ENCODE measurements at regions of chr22 and their contacts with region 1.

Region 1: GRCh38 chr22:29245637-29246385 is 22.0 kb downstream of the RHBDD3 start:
- DNase-seq: peak; percentile 76
- H3K4me3 Mint-ChIP-seq: no peak overlapping the region
- H3K27ac Mint-ChIP-seq: no peak overlapping the region
- H3K4me1 Mint-ChIP-seq: no peaks in the 10 kb centered on the region
- H3K27me3 Mint-ChIP-seq: peaks cover 9% of the 10 kb centered on the region

Region 2: GRCh38 chr22:28594797-28595462 is 650.9 kb before region 1 on chr22:
- CTCF ChIA-PET with region 1: interaction called, 13 read pairs
- POLR2A ChIA-PET with region 1: no interaction called
- intact Hi-C with region 1: loop called (anchors 10 kb)
- DNase-seq: no peak
- H3K4me3 Mint-ChIP-seq: no peak overlapping the region
- H3K27ac Mint-ChIP-seq: no peak overlapping the region
- H3K4me1 Mint-ChIP-seq: no peaks in the 10 kb centered on the region
- H3K27me3 Mint-ChIP-seq: peaks cover 9% of the 10 kb centered on the region

Region 3: DNA sequence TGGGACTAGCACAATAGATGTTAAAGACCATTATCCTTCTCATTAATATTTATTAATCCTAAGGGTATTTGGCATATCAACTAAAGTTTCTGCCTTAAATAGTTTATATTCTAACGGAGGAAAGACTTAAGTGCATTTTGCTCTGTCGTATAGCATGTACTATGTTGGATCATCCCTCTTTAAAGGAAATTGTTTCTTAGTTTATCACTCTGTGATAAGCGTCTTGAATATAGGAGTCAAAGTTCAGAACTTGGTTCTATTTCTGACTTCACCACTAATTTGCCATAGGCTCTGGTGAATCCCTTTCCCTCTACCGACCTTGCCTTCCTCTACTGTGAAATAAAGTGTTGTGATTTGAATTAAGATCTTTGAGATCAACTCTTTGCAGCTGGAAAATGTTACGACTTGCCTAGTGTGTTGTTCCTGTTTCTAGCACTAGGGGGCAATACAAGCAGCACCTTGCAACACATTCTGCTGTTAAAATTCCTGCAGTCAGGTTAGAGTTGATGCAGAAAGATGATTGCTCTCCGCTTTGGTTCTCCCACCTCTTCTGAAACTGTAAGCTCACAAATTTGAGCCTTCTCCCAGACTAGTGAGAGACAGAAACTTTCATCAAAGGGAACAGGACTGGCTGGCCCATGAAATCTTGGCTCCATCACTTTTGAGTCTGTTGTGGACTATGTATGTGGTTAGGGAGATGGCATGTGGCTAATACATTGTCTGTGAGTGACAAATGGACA is 390.3 kb before region 1 on chr22:
- CTCF ChIA-PET with region 1: interaction called, 8 read pairs
- POLR2A ChIA-PET with region 1: no interaction called
- intact Hi-C with region 1: loop called (anchors 5 kb)
- DNase-seq: peak; percentile 38
- H3K4me3 Mint-ChIP-seq: no peak overlapping the region
- H3K27ac Mint-ChIP-seq: no peak overlapping the region
- H3K4me1 Mint-ChIP-seq: no peaks in the 10 kb centered on the region
- H3K27me3 Mint-ChIP-seq: no peaks in the 10 kb centered on the region

Region 4: DNA sequence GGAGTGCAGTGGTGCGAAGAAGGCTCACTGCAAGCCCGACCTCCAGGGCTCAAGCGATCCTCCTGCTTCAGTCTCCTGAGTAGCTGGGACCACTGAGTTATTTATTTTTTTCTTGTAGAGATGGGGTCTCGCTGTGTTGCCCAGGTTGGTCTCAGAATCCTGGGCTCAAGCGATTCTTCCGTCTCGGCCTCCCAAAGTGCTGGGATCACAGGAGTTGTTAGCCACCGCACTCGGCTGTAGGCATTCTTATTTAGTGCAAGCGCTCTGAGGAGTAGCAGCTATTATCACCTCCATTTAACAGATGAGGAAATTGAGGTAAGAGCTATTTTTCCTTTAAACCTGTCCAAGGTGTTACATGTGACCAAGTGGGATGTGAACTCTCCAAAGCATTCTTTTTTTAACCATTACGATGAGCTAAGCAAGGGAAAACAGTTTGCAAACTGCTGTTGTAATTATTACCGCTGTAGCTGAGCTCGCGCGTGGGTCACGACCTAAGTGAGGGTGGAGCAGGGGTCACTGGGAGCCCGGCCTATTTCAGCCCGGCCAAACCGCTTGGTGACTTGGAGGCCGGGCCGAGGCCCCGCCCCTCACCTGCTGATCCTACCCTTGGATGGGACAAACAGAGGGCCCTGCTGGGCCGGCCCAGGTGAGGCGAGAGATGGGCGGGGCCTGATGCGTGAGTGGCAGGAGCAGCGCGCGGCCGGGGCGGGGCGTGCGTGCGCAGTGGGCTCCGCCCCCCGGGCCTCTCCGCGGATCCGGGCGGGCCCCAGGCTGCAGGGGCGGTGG is 173.4 kb before region 1 on chr22:
- CTCF ChIA-PET with region 1: interaction called, 5 read pairs
- POLR2A ChIA-PET with region 1: no interaction called
- intact Hi-C with region 1: loop called (anchors 10 kb)
- DNase-seq: peak; percentile 89
- H3K4me3 Mint-ChIP-seq: peak overlapping the region; percentile 52
- H3K27ac Mint-ChIP-seq: no peak overlapping the region
- H3K4me1 Mint-ChIP-seq: peaks cover 21% of the 10 kb centered on the region
- H3K27me3 Mint-ChIP-seq: peaks cover 42% of the 10 kb centered on the region

Region 5: GRCh38 chr22:29134448-29134847 is 111.4 kb before region 1 on chr22:
- CTCF ChIA-PET with region 1: no interaction called
- POLR2A ChIA-PET with region 1: no interaction called
- intact Hi-C with region 1: no loop called
- DNase-seq: no peak
- H3K4me3 Mint-ChIP-seq: no peak overlapping the region
- H3K27ac Mint-ChIP-seq: no peak overlapping the region
- H3K4me1 Mint-ChIP-seq: no peaks in the 10 kb centered on the region
- H3K27me3 Mint-ChIP-seq: peaks cover 15% of the 10 kb centered on the region

Region 6: DNA sequence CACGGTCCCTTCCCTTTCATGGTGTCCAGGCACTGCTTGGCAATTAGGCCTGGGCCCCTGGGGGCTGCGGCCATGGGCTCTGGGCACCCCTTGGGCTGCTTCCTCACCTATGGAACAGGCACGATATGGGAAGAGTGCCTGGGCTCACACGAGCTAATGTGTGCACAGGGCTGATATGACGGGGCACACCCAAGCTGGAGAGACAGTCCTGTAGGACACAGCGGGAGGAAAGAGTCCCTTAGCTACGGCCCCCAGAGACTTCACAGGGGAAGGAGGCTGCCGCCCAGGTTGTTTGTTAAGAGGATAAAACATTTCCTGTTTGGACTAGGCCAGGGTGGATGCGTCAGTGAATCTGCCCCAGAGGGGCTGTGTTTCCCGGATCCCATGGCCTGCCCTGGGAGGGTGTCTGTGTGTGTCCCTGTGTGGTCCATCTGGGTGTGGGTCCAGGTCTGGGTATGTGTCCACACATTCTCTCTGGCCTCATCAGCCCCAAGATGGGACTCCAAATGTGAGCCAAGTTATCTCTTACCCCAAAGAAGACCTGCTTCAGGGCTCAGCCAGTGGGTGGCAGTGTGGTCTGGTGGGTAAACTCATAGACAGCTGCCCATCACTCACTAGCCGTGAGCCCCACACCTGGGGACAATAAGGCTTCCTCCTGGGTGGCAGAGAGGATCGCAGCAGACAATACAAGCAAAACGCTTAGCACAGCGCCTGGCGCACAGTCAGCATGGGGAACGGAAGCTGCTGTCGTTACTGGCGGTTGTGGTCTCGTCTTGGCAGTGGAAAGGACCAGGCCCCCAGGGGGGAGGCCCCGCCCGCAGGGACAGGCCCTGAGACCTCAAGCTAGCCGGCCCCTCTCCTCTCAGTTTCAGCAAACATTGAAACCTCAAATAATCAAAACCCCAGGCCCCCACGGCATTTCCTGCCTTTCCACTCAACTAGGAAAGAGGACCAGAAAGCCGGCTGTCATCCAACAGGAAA is 43.3 kb before region 1 on chr22:
- CTCF ChIA-PET with region 1: interaction called, 25 read pairs
- POLR2A ChIA-PET with region 1: no interaction called
- intact Hi-C with region 1: loop called (anchors 5 kb)
- DNase-seq: peak; percentile 80
- H3K4me3 Mint-ChIP-seq: no peak overlapping the region
- H3K27ac Mint-ChIP-seq: no peak overlapping the region
- H3K4me1 Mint-ChIP-seq: peaks cover 12% of the 10 kb centered on the region
- H3K27me3 Mint-ChIP-seq: peaks cover 42% of the 10 kb centered on the region

Region 7: DNA sequence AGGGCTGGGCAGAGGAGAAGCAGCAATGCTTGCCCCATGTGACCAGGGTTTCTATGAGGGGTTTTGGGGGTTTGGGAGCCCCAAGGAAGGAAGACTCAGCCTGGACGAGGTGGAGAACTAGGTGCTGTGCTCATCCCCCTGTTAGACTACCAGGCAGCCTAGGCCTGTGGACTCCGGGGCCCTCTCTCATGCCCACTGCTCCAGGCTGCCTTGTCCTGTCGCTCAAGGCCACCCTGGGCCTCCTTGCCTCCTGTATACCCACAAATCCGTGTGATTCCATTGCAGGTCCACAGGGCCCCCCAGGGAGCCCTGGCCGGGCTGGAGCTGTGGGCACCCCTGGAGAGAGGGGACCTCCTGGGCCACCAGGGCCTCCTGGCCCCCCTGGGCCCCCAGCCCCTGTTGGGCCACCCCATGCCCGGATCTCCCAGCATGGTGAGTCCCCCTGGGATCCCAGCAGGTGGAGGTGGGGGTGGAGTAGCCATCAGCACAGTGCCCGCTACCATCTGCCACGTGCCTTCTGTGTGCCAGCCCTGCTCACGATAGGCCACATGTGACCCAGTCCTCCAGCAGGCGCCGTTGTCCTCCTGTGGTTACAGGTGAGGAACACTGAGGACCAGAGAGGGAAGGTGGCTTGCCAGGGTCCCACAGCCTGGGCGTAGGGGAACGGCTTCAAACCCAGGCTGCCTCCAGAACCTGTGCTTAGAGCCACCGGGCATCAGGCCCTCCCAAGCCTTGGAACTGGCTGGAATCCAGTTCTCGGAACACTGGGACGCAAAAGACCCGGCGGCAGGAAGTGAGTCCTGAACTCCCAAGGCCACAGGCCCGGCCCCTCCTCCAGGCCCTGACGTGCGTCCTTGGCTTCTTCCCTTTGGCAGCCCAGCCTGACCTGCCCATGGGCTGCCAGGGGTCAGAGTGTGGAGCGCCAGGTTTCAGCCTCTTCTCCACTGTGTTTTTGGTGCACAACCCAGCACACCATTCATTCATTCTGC is 13.5 kb before region 1 on chr22:
- CTCF ChIA-PET with region 1: interaction called, 13 read pairs
- POLR2A ChIA-PET with region 1: no interaction called
- intact Hi-C with region 1: no loop called
- DNase-seq: no peak
- H3K4me3 Mint-ChIP-seq: no peak overlapping the region
- H3K27ac Mint-ChIP-seq: no peak overlapping the region
- H3K4me1 Mint-ChIP-seq: no peaks in the 10 kb centered on the region
- H3K27me3 Mint-ChIP-seq: no peaks in the 10 kb centered on the region

Region 8: GRCh38 chr22:29320546-29320945 is 74.7 kb after region 1 on chr22:
- CTCF ChIA-PET with region 1: no interaction called
- POLR2A ChIA-PET with region 1: no interaction called
- intact Hi-C with region 1: no loop called
- DNase-seq: no peak
- H3K4me3 Mint-ChIP-seq: no peak overlapping the region
- H3K27ac Mint-ChIP-seq: no peak overlapping the region
- H3K4me1 Mint-ChIP-seq: no peaks in the 10 kb centered on the region
- H3K27me3 Mint-ChIP-seq: peaks cover 10% of the 10 kb centered on the region

Region 9: GRCh38 chr22:29580200-29580810 is 334.5 kb after region 1 on chr22:
- CTCF ChIA-PET with region 1: no interaction called
- POLR2A ChIA-PET with region 1: no interaction called
- intact Hi-C with region 1: no loop called
- DNase-seq: peak; percentile 20
- H3K4me3 Mint-ChIP-seq: peak overlapping the region; percentile 85
- H3K27ac Mint-ChIP-seq: peak overlapping the region; percentile 82
- H3K4me1 Mint-ChIP-seq: peaks cover 13% of the 10 kb centered on the region
- H3K27me3 Mint-ChIP-seq: no peaks in the 10 kb centered on the region

Measured in activated CD4-positive, alpha-beta memory T cell treated with anti-CD3 and anti-CD28 coated beads for 36 hours (primary cell).